Lower leg skin (tissue), 4 donors: ENCODE measurements at regions of chr1 and their contacts with region 1.

Region 1: DNA sequence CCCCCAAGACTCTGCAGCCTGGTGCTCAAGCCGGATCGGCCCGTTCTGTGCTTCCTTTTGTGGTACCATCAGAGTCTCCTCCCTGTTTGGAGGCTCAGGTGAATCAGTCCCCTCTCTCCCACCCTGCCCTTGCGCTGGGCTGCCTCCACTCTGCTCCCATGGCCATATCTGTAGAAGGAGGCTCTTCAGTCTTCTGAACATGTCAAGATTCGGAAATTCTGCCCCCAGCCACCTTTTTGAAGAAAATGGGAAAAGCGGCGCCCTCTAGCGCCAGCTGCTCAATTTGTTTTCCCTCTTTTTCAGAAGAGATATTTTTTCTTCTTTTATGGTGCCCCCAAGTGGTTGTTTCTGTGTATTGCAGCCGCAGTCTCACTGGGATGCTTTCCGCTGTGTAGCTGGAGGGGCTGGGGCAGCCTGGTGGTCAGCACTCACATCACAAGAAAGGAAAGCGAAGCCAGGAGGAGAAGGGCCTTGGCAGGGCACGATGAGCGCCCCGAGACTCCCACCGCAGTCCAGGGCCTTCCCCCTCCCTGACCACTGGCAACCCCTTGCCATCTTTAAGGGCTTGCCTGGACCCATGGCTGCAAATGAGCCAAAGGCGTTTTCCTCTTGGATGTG is 58.4 kb upstream of the CACNA1E start:
- DNase-seq: peak; percentile 43 to 89
- H3K4me3 ChIP-seq: no peak overlapping the region
- CTCF ChIP-seq: peak in 1 of 3 donors; percentile 64
- POLR2A ChIP-seq: no peak

Region 2: GRCh38 chr1:181189691-181190363 is 235.1 kb before region 1 on chr1:
- intact Hi-C with region 1: loop called (anchors 5 kb)
- DNase-seq: peak; percentile 24 to 88
- H3K4me3 ChIP-seq: no peak overlapping the region
- CTCF ChIP-seq: peak in 1 of 3 donors; percentile 30
- POLR2A ChIP-seq: no peak

Region 3: GRCh38 chr1:181366910-181367309 is 58.0 kb before region 1 on chr1:
- intact Hi-C with region 1: no loop called
- DNase-seq: peak in 1 of 2 donors; percentile 58
- H3K4me3 ChIP-seq: no peak overlapping the region
- CTCF ChIP-seq: no peak
- POLR2A ChIP-seq: no peak

Region 4: DNA sequence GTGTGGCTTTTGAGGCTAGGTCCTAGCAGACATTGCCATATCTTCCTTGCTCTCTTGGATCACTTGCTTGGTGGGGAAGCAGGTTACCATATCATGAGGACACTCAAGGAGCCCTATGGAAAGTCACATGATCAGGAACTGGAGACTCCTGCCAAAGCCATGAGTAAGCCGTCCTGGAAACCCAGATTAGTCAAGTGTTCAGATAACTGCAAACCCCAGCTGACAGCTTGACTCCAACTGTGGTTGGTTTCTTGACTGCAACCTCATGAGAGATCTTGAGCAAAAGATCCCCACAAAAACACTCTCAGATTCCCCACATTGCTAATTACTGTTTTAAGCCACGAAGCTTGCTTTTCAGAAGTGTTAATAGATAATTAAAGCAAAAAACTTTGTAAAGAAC is 117.1 kb after region 1 on chr1:
- intact Hi-C with region 1: no loop called
- DNase-seq: no peak
- H3K4me3 ChIP-seq: no peak overlapping the region
- CTCF ChIP-seq: no peak
- POLR2A ChIP-seq: no peak